HepG2 (cell line): ENCODE measurements at regions of chr10 and their contacts with region 1.

Region 1: GRCh38 chr10:43348511-43349312 is 22.7 kb upstream of the FXYD4 start:
- DNase-seq: peak; percentile 60
- ATAC-seq: peak; percentile 99
- H3K4me3 ChIP-seq: no peak overlapping the region
- H3K27ac ChIP-seq: no peak overlapping the region
- H3K4me1 ChIP-seq: no peaks in the 10 kb centered on the region
- H3K27me3 ChIP-seq: peaks cover 3 to 16% of the 10 kb centered on the region in 2 experiments
- CTCF ChIP-seq: peak; percentile 94
- EP300 ChIP-seq: no peak
- POLR2A ChIP-seq: no peak
- RAD21 ChIP-seq: peak; percentile 93

Region 2: GRCh38 chr10:43204943-43205671 is 143.6 kb before region 1 on chr10:
- CTCF ChIA-PET with region 1: no interaction called
- POLR2A ChIA-PET with region 1: no interaction called
- in situ Hi-C with region 1: no loop called
- intact Hi-C with region 1: loop called (anchors 1 kb)
- DNase-seq: peak; percentile 38
- ATAC-seq: peak; percentile 88
- H3K4me3 ChIP-seq: no peak overlapping the region
- H3K27ac ChIP-seq: no peak overlapping the region
- H3K4me1 ChIP-seq: no peaks in the 10 kb centered on the region
- H3K27me3 ChIP-seq: peaks cover 0 to 4% of the 10 kb centered on the region in 2 experiments; a peak in 2 of 5 replicates
- CTCF ChIP-seq: peak; percentile 88
- EP300 ChIP-seq: no peak
- POLR2A ChIP-seq: no peak
- RAD21 ChIP-seq: peak; percentile 33; the same call in 1 of the 2 replicates

Region 3: GRCh38 chr10:43221419-43222209 is 127.1 kb before region 1 on chr10:
- CTCF ChIA-PET with region 1: no interaction called
- POLR2A ChIA-PET with region 1: no interaction called
- in situ Hi-C with region 1: no loop called
- intact Hi-C with region 1: loop called (anchors 5 kb)
- DNase-seq: peak; percentile 23
- ATAC-seq: peak; percentile 94
- H3K4me3 ChIP-seq: no peak overlapping the region
- H3K27ac ChIP-seq: no peak overlapping the region
- H3K4me1 ChIP-seq: no peaks in the 10 kb centered on the region
- H3K27me3 ChIP-seq: peaks cover 1 to 18% of the 10 kb centered on the region in 2 experiments; a peak in 2 of 5 replicates
- CTCF ChIP-seq: peak; percentile 71
- EP300 ChIP-seq: no peak
- POLR2A ChIP-seq: no peak
- RAD21 ChIP-seq: no peak

Region 4: DNA sequence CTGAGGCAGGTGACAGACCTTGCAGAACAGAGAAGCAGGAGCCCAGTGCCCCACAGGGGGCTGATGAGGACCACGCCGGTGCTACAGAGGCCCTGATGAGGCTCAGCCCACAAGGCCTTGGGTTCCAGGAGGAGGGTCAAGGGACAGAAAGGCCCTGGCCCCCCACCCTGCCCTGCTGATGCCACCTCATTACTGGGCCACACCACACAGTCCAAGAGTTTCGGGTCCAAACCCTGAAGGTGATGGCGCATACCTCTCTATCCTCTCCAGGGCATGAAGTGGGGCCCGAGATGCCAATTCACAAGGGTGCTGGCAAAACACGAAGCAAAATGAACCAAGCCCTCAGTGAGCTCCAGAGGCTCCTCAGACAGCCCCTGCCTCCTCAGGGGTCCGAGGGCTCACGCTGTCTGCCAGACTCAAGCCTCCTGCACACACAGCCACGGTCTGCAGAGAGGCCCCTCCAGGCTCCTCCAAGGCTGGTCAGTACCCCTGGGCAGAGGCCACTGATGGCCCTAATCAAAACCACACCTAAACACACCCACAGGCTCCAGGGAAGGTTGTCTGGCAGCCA is 114.2 kb before region 1 on chr10:
- CTCF ChIA-PET with region 1: no interaction called
- POLR2A ChIA-PET with region 1: no interaction called
- in situ Hi-C with region 1: no loop called
- intact Hi-C with region 1: no loop called
- DNase-seq: no peak
- ATAC-seq: no peak
- H3K4me3 ChIP-seq: no peak overlapping the region
- H3K27ac ChIP-seq: no peak overlapping the region
- H3K4me1 ChIP-seq: no peaks in the 10 kb centered on the region
- H3K27me3 ChIP-seq: peaks cover 2 to 31% of the 10 kb centered on the region in 2 experiments; a peak in 4 of 5 replicates
- CTCF ChIP-seq: no peak
- EP300 ChIP-seq: no peak
- POLR2A ChIP-seq: no peak
- RAD21 ChIP-seq: no peak

Region 5: DNA sequence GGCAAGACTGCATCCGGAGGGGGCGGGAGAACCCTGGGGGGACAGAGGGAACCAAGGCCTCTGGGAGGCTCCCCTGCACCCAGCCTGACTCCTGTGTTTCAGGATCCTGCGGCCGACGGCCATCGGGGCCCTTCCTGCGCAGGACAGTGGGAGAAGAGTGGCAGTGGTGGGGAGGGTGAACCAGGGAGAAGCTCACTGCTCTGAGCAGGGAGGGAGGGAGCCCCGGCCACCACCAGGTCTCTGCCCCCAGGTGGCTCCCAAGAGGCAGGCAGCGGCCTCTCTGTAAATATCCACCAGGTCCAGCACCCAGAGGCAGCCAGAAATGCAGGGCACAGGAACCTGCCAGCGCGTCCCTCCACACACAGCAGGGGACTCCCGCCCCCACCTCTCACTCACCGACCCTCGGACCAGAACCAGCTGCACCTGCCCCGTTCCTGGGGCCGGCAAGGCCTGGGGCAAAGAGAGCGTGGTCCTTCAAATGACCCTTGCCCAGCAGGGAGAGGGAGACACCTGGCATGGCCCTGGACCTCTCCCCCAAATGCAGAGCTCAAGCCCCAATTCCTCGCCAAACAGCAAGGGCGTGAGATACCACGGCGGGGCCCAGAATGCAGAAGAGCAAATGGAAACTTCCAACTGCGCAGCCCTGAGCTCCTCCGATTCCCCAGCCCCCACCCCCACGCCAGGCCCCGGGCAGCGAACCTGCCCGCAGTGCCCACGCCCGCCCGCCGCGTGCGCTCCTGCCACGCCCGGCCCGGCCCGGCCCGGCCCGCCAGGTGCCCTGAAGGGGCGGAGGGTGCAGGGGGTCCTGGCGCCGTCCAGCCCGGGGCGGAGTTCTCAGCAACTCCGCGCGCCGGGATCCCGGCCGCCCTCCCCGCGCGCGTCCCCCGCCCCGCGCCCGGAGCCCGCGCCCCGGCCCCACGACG is 82.7 kb before region 1 on chr10:
- CTCF ChIA-PET with region 1: interaction called, 8 read pairs
- POLR2A ChIA-PET with region 1: no interaction called
- in situ Hi-C with region 1: no loop called
- intact Hi-C with region 1: loop called (anchors 1 kb)
- DNase-seq: peak; percentile 36
- ATAC-seq: peak; percentile 94
- H3K4me3 ChIP-seq: peak overlapping the region in 2 of 3 experiments; percentile 2 to 64; a peak in 3 of 6 replicates
- H3K27ac ChIP-seq: no peak overlapping the region
- H3K4me1 ChIP-seq: peaks cover 4% of the 10 kb centered on the region
- H3K27me3 ChIP-seq: peaks cover 7 to 31% of the 10 kb centered on the region in 2 experiments; a peak in 4 of 5 replicates
- CTCF ChIP-seq: peak; percentile 74
- EP300 ChIP-seq: no peak
- POLR2A ChIP-seq: no peak
- RAD21 ChIP-seq: peak; percentile 54

Region 6: DNA sequence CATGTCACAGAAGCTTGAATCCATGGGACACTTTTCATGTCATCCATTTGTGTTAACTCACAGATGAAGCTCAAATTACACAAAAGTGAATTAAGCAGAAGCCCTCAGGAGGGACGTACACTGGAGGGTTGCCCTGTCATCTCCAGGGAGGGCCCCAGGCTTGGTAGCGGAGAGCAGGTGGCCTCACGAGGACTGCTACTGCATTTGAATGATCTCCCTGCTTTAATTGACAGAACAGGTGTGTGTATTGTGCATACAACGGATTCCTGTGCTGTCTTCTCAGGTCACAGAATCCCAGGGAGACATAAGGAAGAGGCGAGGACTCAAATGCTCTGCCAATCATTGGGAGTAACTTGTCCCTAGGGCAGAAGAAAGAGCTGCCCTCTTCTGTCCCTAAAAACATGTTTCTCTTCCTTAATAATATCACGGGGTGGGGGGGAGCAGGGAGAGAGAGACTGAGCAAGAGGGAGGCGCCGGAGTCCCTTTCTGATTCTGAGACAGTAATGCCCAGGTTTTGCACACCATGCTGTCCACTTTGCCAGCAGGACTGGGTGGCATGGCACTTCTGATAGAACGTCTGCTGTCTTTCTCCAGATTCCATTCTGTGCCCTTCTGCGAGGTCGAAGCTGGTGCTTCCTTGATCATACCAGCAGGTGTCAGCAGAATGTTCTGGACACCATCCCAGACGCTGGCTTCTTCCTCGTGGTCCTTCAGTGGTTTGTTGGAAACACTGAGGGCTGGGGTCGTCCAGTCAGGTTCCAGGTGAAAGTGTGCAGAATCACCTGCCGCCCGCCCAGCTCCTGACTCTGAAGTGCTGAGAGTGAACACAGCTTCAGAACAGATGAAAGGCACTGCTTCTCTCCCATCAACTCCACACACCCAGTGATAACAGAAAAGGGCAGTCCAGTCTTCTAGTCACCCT is 55.7 kb before region 1 on chr10:
- CTCF ChIA-PET with region 1: interaction called, 16 read pairs
- POLR2A ChIA-PET with region 1: no interaction called
- in situ Hi-C with region 1: loop called (anchors 5 kb)
- intact Hi-C with region 1: loop called (anchors 1 kb)
- DNase-seq: peak; percentile 21
- ATAC-seq: peak; percentile 88
- H3K4me3 ChIP-seq: no peak overlapping the region
- H3K27ac ChIP-seq: no peak overlapping the region
- H3K4me1 ChIP-seq: no peaks in the 10 kb centered on the region
- H3K27me3 ChIP-seq: peaks cover 1 to 17% of the 10 kb centered on the region in 2 experiments; a peak in 3 of 5 replicates
- CTCF ChIP-seq: peak; percentile 88
- EP300 ChIP-seq: no peak
- POLR2A ChIP-seq: no peak
- RAD21 ChIP-seq: peak; percentile 69; the same call in 1 of the 2 replicates

Region 7: DNA sequence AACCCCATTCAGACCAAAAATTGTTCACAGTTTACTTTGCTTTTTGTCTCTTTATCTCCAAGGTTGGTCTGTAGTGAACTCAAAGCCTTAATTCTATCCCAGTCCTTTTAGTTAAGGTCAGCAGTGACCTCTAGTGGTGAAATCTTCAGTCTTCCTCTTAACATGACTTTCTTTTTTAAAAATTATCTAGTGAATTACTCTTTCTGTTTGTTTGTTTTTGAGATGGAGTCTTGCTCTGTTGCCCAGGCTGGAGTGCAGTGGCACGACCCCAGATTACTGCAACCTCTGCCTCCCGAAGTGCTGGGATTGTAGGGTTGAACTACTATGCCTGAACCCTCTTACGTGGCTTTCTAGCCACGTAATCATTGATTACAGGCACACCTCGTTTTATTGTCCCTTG is 113.2 kb after region 1 on chr10:
- CTCF ChIA-PET with region 1: interaction called, 4 read pairs
- POLR2A ChIA-PET with region 1: no interaction called
- in situ Hi-C with region 1: no loop called
- intact Hi-C with region 1: loop called (anchors 1 kb)
- DNase-seq: peak; percentile 84
- ATAC-seq: peak; percentile 79
- H3K4me3 ChIP-seq: no peak overlapping the region
- H3K27ac ChIP-seq: no peak overlapping the region
- H3K4me1 ChIP-seq: peaks cover 10% of the 10 kb centered on the region; the same call in 1 of the 2 replicates
- H3K27me3 ChIP-seq: no peaks in the 10 kb centered on the region
- CTCF ChIP-seq: peak; percentile 73
- EP300 ChIP-seq: no peak
- POLR2A ChIP-seq: no peak
- RAD21 ChIP-seq: peak; percentile 49; the same call in 1 of the 2 replicates